ENCODE measurements at regions of chr12 and their contacts with region 1.

Region 1: DNA sequence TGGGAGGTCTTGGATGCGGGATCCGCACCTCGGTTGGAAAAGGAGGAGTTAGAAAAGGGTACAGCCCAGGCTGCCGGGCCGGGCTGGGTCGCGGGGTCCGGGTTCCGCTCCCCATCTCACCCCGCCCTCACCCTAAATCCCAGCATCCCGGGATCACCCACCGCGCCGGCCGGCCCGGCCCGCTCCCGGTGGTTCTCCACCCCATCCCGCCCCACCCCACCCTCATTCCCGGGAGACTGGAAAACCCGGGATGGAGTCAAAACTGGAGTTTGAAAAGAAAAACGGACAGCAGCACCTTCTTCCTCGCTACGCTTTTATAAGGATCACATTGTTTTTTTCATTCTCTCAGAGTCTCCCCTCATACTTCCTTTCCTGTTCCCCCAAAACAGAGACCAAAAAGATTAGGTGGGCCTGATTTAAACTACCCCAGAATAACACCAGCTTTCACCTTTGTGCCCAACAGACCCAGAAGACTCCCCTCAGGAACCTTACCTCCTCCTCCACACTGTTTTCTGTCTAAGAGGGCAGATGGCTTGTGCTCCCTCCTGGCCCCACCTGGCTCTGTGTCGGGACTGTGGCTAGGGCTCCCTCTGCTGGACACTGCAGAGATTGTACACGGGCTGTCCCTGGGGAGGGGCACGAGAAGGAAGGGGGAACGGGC is 2.8 kb downstream of the GLI1 start:
- DNase-seq: peak; percentile 84
- ATAC-seq: peak; percentile 72
- H3K4me3 Mint-ChIP-seq: peak overlapping the region; percentile 97
- H3K27ac Mint-ChIP-seq: peak overlapping the region; percentile 93
- H3K4me1 Mint-ChIP-seq: peaks cover 60% of the 10 kb centered on the region
- H3K27me3 Mint-ChIP-seq: no peaks in the 10 kb centered on the region
- CTCF ChIP-seq: peak; percentile 85

Region 2: GRCh38 chr12:57124259-57124877 is 338.0 kb before region 1 on chr12:
- CTCF ChIA-PET with region 1: no interaction called
- POLR2A ChIA-PET with region 1: interaction called, 5 read pairs
- intact Hi-C with region 1: loop called (anchors 10 kb)
- DNase-seq: peak; percentile 31
- ATAC-seq: peak; percentile 72
- H3K4me3 Mint-ChIP-seq: no peak overlapping the region
- H3K27ac Mint-ChIP-seq: no peak overlapping the region
- H3K4me1 Mint-ChIP-seq: peaks cover 5% of the 10 kb centered on the region
- H3K27me3 Mint-ChIP-seq: no peaks in the 10 kb centered on the region
- CTCF ChIP-seq: no peak

Region 3: DNA sequence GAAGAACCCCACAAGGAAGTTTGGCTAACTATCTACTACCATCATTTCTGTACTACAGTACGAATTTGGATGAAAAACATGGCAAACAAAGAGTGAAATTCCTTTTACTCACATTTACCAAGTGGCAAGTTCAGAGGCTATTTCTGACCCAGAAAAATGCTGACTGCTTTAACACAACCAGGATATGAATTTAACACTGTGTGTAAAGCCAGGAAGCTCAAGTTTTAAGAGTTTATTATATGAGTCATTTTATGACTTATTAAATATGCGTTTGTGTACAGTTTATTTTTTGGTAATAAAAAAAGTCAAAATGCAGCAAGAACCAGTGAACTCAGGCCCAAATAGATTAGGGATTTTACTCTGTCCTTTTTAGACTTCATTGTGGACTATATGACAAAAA is 153.0 kb before region 1 on chr12:
- CTCF ChIA-PET with region 1: interaction called, 22 read pairs
- POLR2A ChIA-PET with region 1: no interaction called
- intact Hi-C with region 1: no loop called
- DNase-seq: no peak
- ATAC-seq: no peak
- H3K4me3 Mint-ChIP-seq: no peak overlapping the region
- H3K27ac Mint-ChIP-seq: no peak overlapping the region
- H3K4me1 Mint-ChIP-seq: no peaks in the 10 kb centered on the region
- H3K27me3 Mint-ChIP-seq: no peaks in the 10 kb centered on the region
- CTCF ChIP-seq: no peak

Region 4: DNA sequence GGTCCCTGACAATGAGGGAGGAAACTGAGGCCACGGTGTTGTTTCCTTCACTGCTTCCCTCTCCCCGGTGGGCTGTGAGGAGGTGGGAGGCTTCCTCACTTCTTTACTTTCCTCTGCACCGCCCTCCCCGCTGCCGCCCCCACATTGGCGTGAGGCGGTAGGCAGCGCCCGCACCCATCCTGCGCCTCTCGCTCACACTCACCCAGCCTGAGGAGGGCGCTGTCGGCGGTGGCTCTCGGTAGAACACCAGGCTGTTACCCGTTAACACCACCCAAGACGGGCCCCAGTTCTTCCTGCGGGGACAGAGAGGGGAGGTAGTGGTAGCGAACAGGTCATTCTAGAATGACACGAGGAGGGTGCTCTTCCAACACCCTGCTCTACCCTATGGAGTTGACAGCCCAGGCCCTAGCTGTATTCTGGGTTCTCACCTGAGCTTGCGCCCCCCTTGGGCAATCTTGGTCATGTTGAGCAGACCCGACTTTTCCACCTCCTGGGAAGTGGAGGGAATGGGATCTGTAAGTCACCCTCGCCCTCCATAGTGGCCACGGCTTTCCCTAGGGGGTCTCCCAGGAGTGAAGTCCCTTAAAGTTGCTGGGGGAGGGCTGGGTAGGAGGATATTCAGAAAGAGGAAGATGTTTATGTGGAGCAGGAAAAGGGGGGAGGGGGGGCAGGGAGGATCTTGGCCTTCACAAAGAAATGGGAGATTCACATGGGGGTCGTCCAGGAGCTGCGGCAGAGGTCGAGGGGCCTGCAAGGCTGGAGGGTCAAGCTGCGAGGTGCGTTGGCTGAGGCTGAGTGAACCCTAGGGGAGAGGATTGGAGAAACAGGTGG is 14.0 kb after region 1 on chr12:
- CTCF ChIA-PET with region 1: interaction called, 74 read pairs
- POLR2A ChIA-PET with region 1: interaction called, 133 read pairs
- intact Hi-C with region 1: loop called (anchors 1 kb)
- DNase-seq: peak; percentile 54
- ATAC-seq: peak; percentile 38
- H3K4me3 Mint-ChIP-seq: peak overlapping the region; percentile 93
- H3K27ac Mint-ChIP-seq: peak overlapping the region; percentile 100
- H3K4me1 Mint-ChIP-seq: peaks cover 80% of the 10 kb centered on the region
- H3K27me3 Mint-ChIP-seq: no peaks in the 10 kb centered on the region
- CTCF ChIP-seq: no peak

Region 5: DNA sequence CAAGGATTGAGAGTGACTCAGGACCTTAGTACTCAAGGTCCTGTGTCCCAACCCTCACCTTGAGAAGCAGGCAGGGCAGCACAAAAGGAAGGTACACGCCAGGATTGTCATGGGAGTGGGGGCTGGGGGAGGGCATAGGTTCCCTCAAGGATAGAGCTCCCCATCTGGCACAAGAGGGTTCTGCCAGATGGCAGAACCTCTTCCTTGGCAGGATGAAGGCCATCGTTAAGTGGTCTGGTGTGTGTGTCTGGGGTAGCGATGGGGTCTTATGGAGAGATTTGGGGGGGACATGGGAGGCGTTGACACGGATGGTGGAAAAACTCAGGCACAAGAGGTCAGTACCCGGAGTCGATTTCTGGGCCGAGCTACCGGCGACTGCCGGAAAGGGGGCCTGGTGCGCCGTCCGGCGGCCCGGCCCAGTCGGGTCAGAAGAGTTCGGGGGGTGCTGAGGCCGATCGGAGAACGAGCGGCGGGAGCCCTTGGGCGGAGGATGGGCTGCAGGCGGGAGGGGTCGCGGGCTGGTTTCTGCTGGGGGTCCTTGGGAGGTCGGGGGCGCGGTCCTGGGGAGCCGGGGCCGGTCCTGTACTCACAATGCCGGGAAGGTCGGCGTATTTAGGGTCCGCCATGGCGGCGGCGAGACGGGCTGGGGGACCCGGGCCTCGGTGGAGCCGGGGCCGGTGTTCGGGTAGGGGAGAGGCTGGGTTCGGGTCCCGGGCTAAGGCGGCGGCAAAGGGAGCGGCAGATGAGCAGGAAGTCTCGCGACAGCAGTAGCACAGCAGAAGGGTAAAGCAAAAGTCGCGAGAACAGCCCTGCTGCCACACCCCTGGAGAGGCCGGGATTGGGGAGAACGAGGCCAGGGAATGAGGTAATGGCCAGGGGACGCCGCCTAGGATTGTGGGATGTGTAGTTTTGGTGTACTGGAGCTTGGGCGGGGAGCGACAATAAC is 84.3 kb after region 1 on chr12 and contains the start of gene DCTN2:
- CTCF ChIA-PET with region 1: interaction called, 3 read pairs
- POLR2A ChIA-PET with region 1: interaction called, 4 read pairs
- intact Hi-C with region 1: loop called (anchors 1 kb)
- DNase-seq: peak; percentile 81
- ATAC-seq: peak; percentile 97
- H3K4me3 Mint-ChIP-seq: peak within 1 kb of the TSS; percentile 99
- H3K27ac Mint-ChIP-seq: peak within 1 kb of the TSS; percentile 84
- H3K4me1 Mint-ChIP-seq: peaks cover 36% of the 10 kb centered on the region
- H3K27me3 Mint-ChIP-seq: peaks cover 10% of the 10 kb centered on the region
- CTCF ChIP-seq: no peak
- total RNA-seq, gene DCTN2: 83.3 and 91.8 TPM in 2 replicates

Region 6: GRCh38 chr12:57632694-57633477 is 170.5 kb after region 1 on chr12 and contains the start of gene B4GALNT1:
- CTCF ChIA-PET with region 1: interaction called, 5 read pairs
- POLR2A ChIA-PET with region 1: no interaction called
- intact Hi-C with region 1: loop called (anchors 1 kb)
- DNase-seq: peak; percentile 75
- ATAC-seq: peak; percentile 94
- H3K4me3 Mint-ChIP-seq: peak within 1 kb of the TSS; percentile 73
- H3K27ac Mint-ChIP-seq: no peak within 1 kb of the TSS
- H3K4me1 Mint-ChIP-seq: peaks cover 12% of the 10 kb centered on the region
- H3K27me3 Mint-ChIP-seq: peaks cover 46% of the 10 kb centered on the region
- CTCF ChIP-seq: peak; percentile 27
- total RNA-seq, gene B4GALNT1: 0.31 and 0.51 TPM in 2 replicates

Measured in activated B cell treated with CpG ODN at 0.5 μM for 24 hours (primary cell).